WTC11 (cell line): ENCODE measurements at regions of chrX and their contacts with region 1.

Region 1: DNA sequence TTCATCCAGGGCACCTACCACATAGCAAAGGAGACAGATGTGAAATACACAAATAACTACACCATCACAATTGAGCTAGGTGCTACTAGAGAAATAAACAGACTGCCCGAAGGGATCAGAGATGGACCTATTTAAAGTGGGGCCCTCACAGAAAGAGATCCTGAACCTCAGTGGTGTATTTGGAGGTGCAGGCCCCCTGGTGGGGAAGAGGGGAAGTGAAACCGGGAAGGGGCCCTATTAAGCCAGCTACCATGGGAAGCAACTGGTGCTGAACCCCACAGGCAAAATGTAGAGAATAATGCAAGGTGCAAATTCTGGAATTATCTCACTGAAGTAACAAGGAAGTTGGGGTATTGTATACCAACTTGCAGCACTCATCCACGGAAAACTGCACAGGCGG is 78.6 kb upstream of the FAM9A start:
- DNase-seq: peak; percentile 62
- ATAC-seq: peak; percentile 63
- H3K4me3 Mint-ChIP-seq: no peak overlapping the region
- H3K27ac Mint-ChIP-seq: no peak overlapping the region
- H3K4me1 Mint-ChIP-seq: no peaks in the 10 kb centered on the region; the same call in 1 of the 2 replicates
- H3K27me3 Mint-ChIP-seq: no peaks in the 10 kb centered on the region
- CTCF ChIP-seq: peak; percentile 44

Region 2: DNA sequence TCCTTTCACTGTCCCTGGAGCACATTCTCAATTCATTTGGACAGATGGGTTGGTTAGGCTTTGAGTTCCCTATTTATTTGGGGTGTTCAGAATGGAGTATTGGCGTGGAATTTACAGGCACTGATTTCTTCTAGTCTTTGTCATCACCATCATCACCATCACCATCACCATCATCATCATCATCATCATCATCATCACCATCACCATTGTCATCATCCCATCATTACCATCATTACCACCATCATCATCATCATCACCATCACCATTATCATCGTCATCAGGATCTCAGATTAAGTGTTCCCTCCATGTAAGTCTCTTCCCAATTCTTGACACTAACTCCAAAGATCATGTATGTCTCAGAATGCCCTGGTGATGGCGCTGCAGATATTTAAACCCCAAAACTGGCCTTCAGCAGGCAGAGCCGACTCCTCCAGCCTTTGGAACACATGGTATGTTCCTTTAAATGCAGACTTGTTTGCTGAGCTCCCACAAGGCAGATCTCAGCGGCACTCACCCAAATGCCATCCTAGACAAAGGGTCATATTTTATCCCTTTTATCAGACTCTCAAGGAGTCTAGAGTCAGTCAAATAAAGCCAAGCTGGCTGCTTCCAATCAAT is 58.7 kb before region 1 on chrX:
- CTCF ChIA-PET with region 1: interaction called, 23 read pairs
- POLR2A ChIA-PET with region 1: no interaction called
- DNase-seq: peak; percentile 58
- ATAC-seq: peak; percentile 82
- H3K4me3 Mint-ChIP-seq: no peak overlapping the region
- H3K27ac Mint-ChIP-seq: no peak overlapping the region
- H3K4me1 Mint-ChIP-seq: peaks cover 8% of the 10 kb centered on the region
- H3K27me3 Mint-ChIP-seq: no peaks in the 10 kb centered on the region
- CTCF ChIP-seq: no peak

Region 3: DNA sequence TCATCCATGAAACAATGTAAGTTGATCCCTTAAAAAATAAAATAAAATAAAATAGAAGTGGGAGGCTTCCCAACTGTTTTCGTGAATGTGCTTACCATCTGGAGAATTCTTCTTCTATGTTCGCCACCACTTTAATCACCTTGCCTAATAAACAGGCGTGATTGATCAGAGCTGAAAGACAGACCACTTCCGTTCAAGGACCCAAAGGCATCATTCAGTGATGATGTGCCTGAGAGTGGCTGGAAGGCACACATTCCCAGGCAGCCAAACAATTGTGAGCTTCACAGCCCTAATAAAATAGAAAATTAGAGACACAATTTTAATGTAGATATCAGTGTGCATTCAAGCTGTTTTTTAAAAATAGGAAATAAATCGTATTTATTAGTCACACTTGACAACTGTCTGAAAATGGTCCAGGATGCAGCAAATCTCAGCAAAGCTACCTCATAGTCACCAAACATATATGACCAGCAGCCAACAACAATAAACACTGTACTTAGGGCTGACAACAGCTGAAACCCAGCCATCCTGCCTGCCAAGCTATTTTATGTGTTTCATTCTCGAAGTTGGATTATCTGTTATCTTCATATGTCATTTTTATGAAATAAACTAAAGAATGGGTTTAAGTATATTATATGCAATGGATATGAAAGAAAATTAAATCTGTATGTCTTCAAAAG is 317.4 kb after region 1 on chrX:
- CTCF ChIA-PET with region 1: no interaction called
- POLR2A ChIA-PET with region 1: no interaction called
- DNase-seq: no peak
- ATAC-seq: no peak
- H3K4me3 Mint-ChIP-seq: no peak overlapping the region
- H3K27ac Mint-ChIP-seq: no peak overlapping the region
- H3K4me1 Mint-ChIP-seq: peaks cover 11% of the 10 kb centered on the region
- H3K27me3 Mint-ChIP-seq: no peaks in the 10 kb centered on the region
- CTCF ChIP-seq: no peak